ENCODE measurements at regions of chr3 and their contacts with region 1.

Region 1: DNA sequence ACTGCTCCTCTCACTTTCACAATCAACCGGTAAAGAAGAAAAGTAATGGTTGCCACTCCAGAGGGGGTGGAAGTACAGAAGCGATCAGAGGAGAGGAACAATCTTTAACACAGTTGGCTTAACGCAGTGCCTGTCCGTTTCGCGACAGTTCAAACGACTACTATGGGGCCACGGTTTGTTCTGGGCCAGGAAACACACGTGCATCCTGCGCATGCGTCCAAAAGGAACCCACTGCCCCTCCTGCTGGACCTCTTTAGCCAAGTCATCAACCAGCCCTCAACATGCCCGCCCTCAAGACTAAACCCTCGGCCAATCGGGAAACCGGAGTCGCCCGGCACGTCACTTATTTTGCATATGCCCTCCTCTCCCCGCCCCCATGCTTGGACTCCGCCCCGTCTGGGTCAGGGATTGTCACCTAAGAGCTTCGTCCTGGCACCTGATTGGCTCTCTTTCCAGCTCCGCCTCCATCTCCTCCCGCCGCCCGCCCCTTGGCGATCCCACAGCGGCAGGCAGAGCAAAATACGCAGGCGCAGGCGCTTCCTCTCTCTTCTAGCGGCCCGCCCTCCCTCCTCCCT is 345 bp upstream of the CDV3 start:
- DNase-seq: peak; percentile 100
- ATAC-seq: peak; percentile 93 to 97 (median 96)
- H3K4me3 ChIP-seq: peak overlapping the region in 11 of 12 donors; percentile 39 to 96 (median 88)
- H3K27ac ChIP-seq: peak overlapping the region; percentile 91 to 98 (median 96)
- H3K4me1 ChIP-seq: peaks cover 4 to 75% (median 43%) of the 10 kb centered on the region in 12 donors
- H3K27me3 ChIP-seq: no peaks in the 10 kb centered on the region
- CTCF ChIP-seq: peak in 9 of 12 donors; percentile 7 to 51 (median 18)
- POLR2A ChIP-seq: peak in 1 of 2 donors; percentile 70

Region 2: GRCh38 chr3:133464573-133464972 is 108.6 kb before region 1 on chr3:
- intact Hi-C with region 1: loop called in 4 of 10 experiments (anchors 10 kb)
- DNase-seq: no peak
- ATAC-seq: no peak
- H3K4me3 ChIP-seq: no peak overlapping the region
- H3K27ac ChIP-seq: no peak overlapping the region
- H3K4me1 ChIP-seq: peaks cover 0 to 23% (median 8%) of the 10 kb centered on the region in 12 donors
- H3K27me3 ChIP-seq: no peaks in the 10 kb centered on the region
- CTCF ChIP-seq: peak in 6 of 12 donors; percentile 9 to 34 (median 22)
- POLR2A ChIP-seq: no peak

Region 3: DNA sequence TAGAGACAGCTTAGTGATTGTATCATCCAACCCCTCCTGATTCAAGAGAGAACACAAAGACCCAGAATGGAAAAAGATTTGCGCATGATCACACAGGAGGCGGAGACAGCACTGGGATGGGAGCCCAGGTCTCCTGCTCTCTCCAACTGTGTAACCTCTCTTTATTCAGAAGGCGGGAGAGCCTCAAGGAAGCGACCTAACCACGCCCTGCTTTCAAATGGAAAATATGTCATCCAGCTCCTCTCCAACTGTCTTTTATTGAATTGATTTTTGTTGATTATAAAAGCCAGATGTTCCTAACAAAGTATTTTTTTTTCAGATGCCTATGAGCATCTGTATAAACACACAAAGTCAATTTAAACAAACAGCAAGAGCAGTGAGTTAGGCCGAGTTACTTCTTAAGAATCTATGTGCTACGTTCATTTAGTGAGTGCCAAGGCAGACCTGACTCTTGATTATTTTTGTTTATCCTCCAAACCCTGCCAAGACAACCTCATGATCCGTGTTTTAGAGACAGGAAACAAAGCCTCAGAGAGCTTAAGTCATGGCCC is 98.8 kb before region 1 on chr3:
- intact Hi-C with region 1: loop called in 5 of 10 experiments (anchors 5 to 10 kb)
- DNase-seq: peak; percentile 60 to 72 (median 68)
- ATAC-seq: peak; percentile 84 to 94 (median 89)
- H3K4me3 ChIP-seq: no peak overlapping the region
- H3K27ac ChIP-seq: peak overlapping the region; percentile 43 to 80 (median 62)
- H3K4me1 ChIP-seq: peaks cover 0 to 26% (median 11%) of the 10 kb centered on the region in 12 donors
- H3K27me3 ChIP-seq: no peaks in the 10 kb centered on the region
- CTCF ChIP-seq: no peak
- POLR2A ChIP-seq: no peak

Region 4: DNA sequence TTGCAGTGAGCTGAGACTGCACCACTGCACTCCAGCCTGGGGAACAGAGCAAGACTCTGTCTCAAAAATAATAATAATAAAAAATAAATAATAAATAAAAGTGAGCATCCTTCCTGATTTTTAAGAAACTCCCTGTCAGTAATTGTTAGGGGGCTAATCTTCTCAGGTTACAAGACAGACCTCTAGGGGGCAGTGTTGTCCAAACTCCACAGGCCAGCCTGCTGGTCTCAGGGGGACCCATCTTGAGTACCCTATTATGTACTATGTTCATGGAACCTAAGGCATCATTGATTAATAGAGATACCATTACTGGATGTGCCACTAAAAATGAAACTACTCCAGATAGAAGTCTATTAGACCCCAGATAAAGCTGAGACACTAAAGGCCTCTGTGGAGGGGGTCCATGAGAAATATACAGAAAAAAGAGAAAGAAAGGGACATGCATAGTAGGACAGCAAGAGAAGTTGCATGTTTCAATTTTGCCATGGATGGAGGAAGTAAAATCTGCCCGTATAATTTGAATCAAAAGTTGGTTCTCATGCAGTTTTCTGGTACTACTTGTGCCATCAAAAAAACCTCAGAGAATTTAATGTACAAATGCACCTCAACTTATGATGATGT is 85.1 kb before region 1 on chr3:
- intact Hi-C with region 1: loop called in 3 of 10 experiments (anchors 5 to 10 kb)
- DNase-seq: no peak
- ATAC-seq: no peak
- H3K4me3 ChIP-seq: no peak overlapping the region
- H3K27ac ChIP-seq: no peak overlapping the region
- H3K4me1 ChIP-seq: no peaks in the 10 kb centered on the region
- H3K27me3 ChIP-seq: no peaks in the 10 kb centered on the region
- CTCF ChIP-seq: peak; percentile 40 to 72 (median 62)
- POLR2A ChIP-seq: no peak

Region 5: DNA sequence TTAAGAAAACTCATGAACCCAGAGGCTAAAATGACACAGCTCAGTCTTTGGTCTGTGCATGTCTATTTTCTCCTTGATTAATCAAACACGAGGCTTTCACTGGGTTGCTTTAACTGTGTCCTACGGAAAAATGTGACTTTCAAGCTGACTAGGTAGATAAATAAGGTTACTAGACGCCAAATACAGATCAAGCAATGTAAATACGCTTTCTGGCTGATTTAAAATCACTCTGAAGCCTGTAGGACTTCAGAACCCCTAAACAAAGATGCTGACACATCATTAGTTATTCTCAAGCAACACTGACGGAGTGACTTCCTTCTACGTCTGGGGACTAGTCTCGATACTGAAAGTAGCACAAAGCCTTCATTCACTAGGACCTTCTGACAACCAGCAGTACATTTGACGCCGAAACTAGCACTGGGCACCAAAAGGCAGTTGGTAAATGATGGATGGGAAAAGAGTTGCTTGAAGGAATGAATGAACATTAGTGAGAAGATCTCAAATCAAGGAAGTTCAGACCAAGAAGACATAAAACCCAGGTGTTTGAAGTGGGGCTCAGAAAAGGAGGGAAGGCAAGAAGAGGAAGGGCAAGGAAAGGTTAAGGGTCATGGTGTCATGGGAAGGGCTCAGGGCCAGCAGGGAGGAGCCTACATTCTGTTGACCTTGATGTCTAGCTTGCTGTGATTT is 66.8 kb before region 1 on chr3:
- intact Hi-C with region 1: loop called in 1 of 10 experiments (anchors 10 kb)
- DNase-seq: no peak
- ATAC-seq: peak in 2 of 4 donors; percentile 61 to 72
- H3K4me3 ChIP-seq: peak overlapping the region in 3 of 12 donors; percentile 4 to 18 (median 13)
- H3K27ac ChIP-seq: peak overlapping the region in 3 of 12 donors; percentile 14 to 83 (median 49)
- H3K4me1 ChIP-seq: peaks cover 0 to 15% (median 0%) of the 10 kb centered on the region in 12 donors
- H3K27me3 ChIP-seq: no peaks in the 10 kb centered on the region
- CTCF ChIP-seq: no peak
- POLR2A ChIP-seq: no peak

Region 6: GRCh38 chr3:134485718-134486576 is 912.8 kb after region 1 on chr3 and contains the starts of genes ANAPC13 and CEP63:
- intact Hi-C with region 1: loop called in 1 of 10 experiments (anchors 5 kb)
- DNase-seq: peak; percentile 93 to 96 (median 95)
- ATAC-seq: peak; percentile 92 to 96 (median 93)
- H3K4me3 ChIP-seq: peak within 1 kb of the TSS; percentile 61 to 96 (median 80)
- H3K27ac ChIP-seq: peak within 1 kb of the TSS; percentile 81 to 99 (median 96)
- H3K4me1 ChIP-seq: peaks cover 7 to 53% (median 34%) of the 10 kb centered on the region in 12 donors
- H3K27me3 ChIP-seq: no peaks in the 10 kb centered on the region
- CTCF ChIP-seq: no peak
- POLR2A ChIP-seq: no peak
- total RNA-seq, gene ANAPC13: 53.4 to 109 (median 81.3) TPM
- total RNA-seq, gene CEP63: 19.1 to 35.3 (median 30.3) TPM

Measured in heart left ventricle (tissue), 16 donors.